ENCODE measurements at regions of chr9 and their contacts with region 1.

Region 1: DNA sequence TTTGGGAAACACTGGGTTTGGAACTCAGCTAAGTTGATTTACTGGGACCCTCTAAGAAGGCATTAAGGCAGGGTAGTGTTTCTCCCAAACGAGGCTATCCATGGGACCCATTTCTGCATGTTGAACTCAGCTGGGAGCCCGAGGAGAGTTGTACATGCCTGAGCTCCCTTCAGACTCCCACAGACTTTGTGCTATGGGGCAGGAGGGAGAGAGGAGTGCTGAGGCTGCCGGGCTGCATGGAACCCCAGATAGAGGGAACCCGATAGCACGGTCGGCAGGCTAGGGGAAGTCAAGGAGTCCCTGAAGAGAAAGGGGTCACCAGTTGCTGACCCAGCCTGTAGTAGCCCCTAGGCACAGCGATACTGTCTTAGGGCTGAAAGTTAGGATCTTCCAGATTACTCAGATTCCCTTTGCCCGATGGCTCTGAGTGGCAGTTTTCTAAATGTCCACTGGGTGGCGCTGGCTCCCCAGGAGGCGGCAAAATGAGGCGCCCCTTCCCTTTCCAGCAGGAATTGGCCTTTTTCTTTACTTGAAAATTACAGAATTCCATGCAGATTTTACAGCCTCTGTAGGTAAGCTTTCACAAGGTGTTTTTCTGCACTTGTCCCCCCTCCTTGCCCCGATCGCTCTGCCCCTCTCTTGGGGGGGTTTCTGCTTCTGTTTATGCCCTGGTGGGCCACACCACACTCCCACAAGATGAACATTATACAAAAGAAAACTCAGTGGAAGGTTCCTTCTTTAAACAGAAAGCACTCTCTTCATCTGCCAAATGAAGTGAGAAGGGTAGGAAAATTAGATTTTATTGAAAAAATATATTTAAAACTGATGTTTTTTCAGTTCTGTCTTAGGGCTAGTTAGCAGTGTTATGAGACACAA is 17.8 kb downstream of the NANS start:
- DNase-seq: peak; percentile 46 to 78 (median 63)
- ATAC-seq: peak; percentile 47
- H3K4me3 ChIP-seq: no peak overlapping the region
- H3K4me3 Mint-ChIP-seq: peak overlapping the region; percentile 26 to 79 (median 64)
- H3K27ac ChIP-seq: peak overlapping the region; percentile 81
- H3K27ac Mint-ChIP-seq: peak overlapping the region; percentile 83 to 98 (median 94)
- H3K4me1 ChIP-seq: peaks cover 27 to 28% of the 10 kb centered on the region in 2 donors
- H3K4me1 Mint-ChIP-seq: peaks cover 0 to 55% (median 46%) of the 10 kb centered on the region in 7 donors
- H3K27me3 ChIP-seq: no peaks in the 10 kb centered on the region
- H3K27me3 Mint-ChIP-seq: no peaks in the 10 kb centered on the region

Region 2: DNA sequence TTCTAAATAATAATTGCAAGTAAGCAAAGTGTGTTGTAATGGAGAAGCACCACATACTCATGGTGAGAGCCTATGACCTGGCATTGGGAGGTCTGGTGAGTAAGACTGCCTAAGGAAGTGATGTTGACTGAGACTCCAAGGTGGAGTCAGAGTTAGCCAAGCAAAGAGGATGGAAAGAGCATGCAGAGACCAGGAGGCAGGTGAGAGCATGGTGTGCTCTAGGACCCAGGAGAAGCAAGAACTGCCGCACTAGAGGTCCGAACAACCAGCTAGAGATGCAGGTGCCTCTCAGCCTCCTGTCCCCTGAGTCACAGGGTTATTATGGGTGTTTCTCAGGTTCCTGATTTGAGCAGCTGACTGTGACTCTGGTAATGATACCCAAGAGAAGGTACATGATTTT is 63.9 kb before region 1 on chr9:
- CTCF ChIA-PET with region 1: no interaction called
- POLR2A ChIA-PET with region 1: no interaction called
- intact Hi-C with region 1: no loop called
- DNase-seq: no peak
- ATAC-seq: peak; percentile 61
- H3K4me3 ChIP-seq: no peak overlapping the region
- H3K4me3 Mint-ChIP-seq: peak overlapping the region in 5 of 10 donors; percentile 6 to 65 (median 33)
- H3K27ac ChIP-seq: no peak overlapping the region
- H3K27ac Mint-ChIP-seq: peak overlapping the region in 5 of 9 donors; percentile 7 to 74 (median 60)
- H3K4me1 ChIP-seq: no peaks in the 10 kb centered on the region
- H3K4me1 Mint-ChIP-seq: peaks cover 1 to 38% (median 28%) of the 10 kb centered on the region in 7 donors
- H3K27me3 ChIP-seq: no peaks in the 10 kb centered on the region
- H3K27me3 Mint-ChIP-seq: no peaks in the 10 kb centered on the region

Region 3: DNA sequence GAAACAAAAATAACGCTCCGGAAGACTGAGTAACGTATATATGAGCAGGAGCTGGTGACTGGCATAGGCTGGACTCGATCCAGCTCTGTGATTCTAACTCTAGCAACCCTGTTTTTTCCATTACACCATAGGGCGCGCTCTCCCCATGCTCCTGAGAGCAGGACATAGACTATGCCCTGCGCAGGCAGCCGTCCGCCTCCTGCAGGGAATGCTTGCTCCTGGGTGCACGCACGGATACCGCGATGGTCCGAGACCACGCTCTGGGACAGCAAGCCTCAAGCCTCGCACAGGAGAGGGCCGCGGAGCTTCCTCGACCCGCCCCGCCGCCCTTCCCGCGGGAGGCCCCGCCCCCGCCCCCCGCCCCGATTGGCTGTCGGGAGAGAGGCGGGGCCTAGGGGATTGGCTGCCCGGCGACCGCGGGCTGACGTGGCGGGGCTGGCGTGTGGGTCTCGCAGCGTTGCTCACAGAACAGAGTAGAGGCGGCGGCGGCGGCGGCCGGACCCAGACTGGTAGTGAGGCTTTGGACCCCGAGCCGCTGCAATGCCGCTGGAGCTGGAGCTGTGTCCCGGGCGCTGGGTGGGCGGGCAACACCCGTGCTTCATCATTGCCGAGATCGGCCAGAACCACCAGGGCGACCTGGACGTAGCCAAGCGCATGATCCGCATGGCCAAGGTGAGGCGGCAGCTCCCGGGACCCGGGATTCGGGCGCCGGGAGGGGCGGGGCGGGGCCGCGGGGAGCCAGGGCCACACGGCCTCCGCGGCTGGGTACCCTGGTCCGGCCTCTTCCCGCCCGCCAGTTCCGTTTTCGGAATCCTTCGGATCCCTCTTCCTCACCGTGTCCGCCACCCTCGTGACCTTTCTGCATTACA is 17.9 kb before region 1 on chr9 and contains the start of gene NANS:
- CTCF ChIA-PET with region 1: no interaction called
- POLR2A ChIA-PET with region 1: interaction called, 3 read pairs
- intact Hi-C with region 1: loop called (anchors 1 kb)
- DNase-seq: peak; percentile 84 to 93 (median 91)
- ATAC-seq: peak; percentile 99
- H3K4me3 ChIP-seq: peak within 1 kb of the TSS; percentile 73
- H3K4me3 Mint-ChIP-seq: peak within 1 kb of the TSS; percentile 93 to 100 (median 95)
- H3K27ac ChIP-seq: peak within 1 kb of the TSS; percentile 93
- H3K27ac Mint-ChIP-seq: peak within 1 kb of the TSS; percentile 93 to 100 (median 97)
- H3K4me1 ChIP-seq: peaks cover 9 to 22% of the 10 kb centered on the region in 2 donors
- H3K4me1 Mint-ChIP-seq: peaks cover 6 to 40% (median 27%) of the 10 kb centered on the region in 7 donors
- H3K27me3 ChIP-seq: no peaks in the 10 kb centered on the region
- H3K27me3 Mint-ChIP-seq: no peaks in the 10 kb centered on the region
- total RNA-seq, gene NANS: 16.3 to 58.9 (median 51.8) TPM

Region 4: DNA sequence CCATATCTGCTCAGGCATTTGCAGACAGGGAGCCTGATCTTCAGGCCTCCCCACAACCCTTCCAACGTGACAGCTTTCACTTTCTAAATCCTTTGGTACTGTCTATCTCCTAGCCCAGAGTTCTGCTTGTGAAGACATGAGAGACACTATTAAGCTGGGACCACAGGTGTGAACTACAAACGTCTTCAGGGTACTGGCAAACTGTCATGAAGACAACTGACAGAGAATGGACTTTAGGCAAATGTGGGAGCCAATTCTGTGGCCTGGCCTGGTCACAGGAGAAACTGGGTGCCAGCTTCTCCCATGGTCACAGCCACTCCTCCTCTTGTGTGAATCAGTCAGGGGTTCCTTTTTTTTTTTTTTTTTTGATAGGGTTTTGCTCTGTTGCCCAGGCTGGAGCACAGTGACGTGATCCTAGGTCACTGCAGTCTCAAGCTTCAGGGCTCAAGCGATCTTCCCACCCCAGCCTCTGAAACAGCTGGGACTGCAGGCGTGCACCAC is 34.2 kb after region 1 on chr9:
- CTCF ChIA-PET with region 1: interaction called, 5 read pairs
- POLR2A ChIA-PET with region 1: interaction called, 10 read pairs
- intact Hi-C with region 1: no loop called
- DNase-seq: peak in 8 of 9 donors; percentile 37 to 76 (median 66)
- ATAC-seq: peak; percentile 93
- H3K4me3 ChIP-seq: peak overlapping the region; percentile 10
- H3K4me3 Mint-ChIP-seq: peak overlapping the region; percentile 52 to 83 (median 73)
- H3K27ac ChIP-seq: peak overlapping the region; percentile 77
- H3K27ac Mint-ChIP-seq: peak overlapping the region; percentile 81 to 99 (median 97)
- H3K4me1 ChIP-seq: peaks cover 69 to 70% of the 10 kb centered on the region in 2 donors
- H3K4me1 Mint-ChIP-seq: peaks cover 50 to 91% (median 83%) of the 10 kb centered on the region in 7 donors
- H3K27me3 ChIP-seq: no peaks in the 10 kb centered on the region
- H3K27me3 Mint-ChIP-seq: no peaks in the 10 kb centered on the region

Region 5: GRCh38 chr9:98192503-98193335 is 118.4 kb after region 1 on chr9 and contains the start of gene CORO2A:
- CTCF ChIA-PET with region 1: interaction called, 6 read pairs
- POLR2A ChIA-PET with region 1: no interaction called
- intact Hi-C with region 1: loop called (anchors 1 to 5 kb)
- DNase-seq: peak; percentile 37 to 85 (median 47)
- ATAC-seq: peak; percentile 86
- H3K4me3 ChIP-seq: peak within 1 kb of the TSS; percentile 81
- H3K4me3 Mint-ChIP-seq: peak within 1 kb of the TSS; percentile 76 to 92 (median 86)
- H3K27ac ChIP-seq: peak within 1 kb of the TSS; percentile 53
- H3K27ac Mint-ChIP-seq: peak within 1 kb of the TSS; percentile 19 to 90 (median 83)
- H3K4me1 ChIP-seq: peaks cover 17 to 22% of the 10 kb centered on the region in 2 donors
- H3K4me1 Mint-ChIP-seq: peaks cover 12 to 46% (median 41%) of the 10 kb centered on the region in 7 donors
- H3K27me3 ChIP-seq: no peaks in the 10 kb centered on the region
- H3K27me3 Mint-ChIP-seq: peaks cover 0 to 17% (median 0%) of the 10 kb centered on the region in 5 donors
- total RNA-seq, gene CORO2A: 3.0 to 9.7 (median 7.7) TPM

Region 6: GRCh38 chr9:98215821-98216220 is 141.5 kb after region 1 on chr9:
- CTCF ChIA-PET with region 1: interaction called, 3 read pairs
- POLR2A ChIA-PET with region 1: no interaction called
- intact Hi-C with region 1: loop called in 1 of 2 experiments (anchors 1 kb)
- DNase-seq: peak in 3 of 9 donors; percentile 11 to 18 (median 12)
- ATAC-seq: no peak
- H3K4me3 ChIP-seq: no peak overlapping the region
- H3K4me3 Mint-ChIP-seq: no peak overlapping the region
- H3K27ac ChIP-seq: no peak overlapping the region
- H3K27ac Mint-ChIP-seq: no peak overlapping the region
- H3K4me1 ChIP-seq: no peaks in the 10 kb centered on the region
- H3K4me1 Mint-ChIP-seq: peaks cover 0 to 6% (median 0%) of the 10 kb centered on the region in 7 donors
- H3K27me3 ChIP-seq: no peaks in the 10 kb centered on the region
- H3K27me3 Mint-ChIP-seq: no peaks in the 10 kb centered on the region

Region 7: GRCh38 chr9:98263482-98264357 is 189.4 kb after region 1 on chr9:
- CTCF ChIA-PET with region 1: interaction called, 4 read pairs
- POLR2A ChIA-PET with region 1: no interaction called
- intact Hi-C with region 1: loop called (anchors 1 kb)
- DNase-seq: peak; percentile 54 to 82 (median 77)
- ATAC-seq: peak; percentile 100
- H3K4me3 ChIP-seq: no peak overlapping the region
- H3K4me3 Mint-ChIP-seq: no peak overlapping the region
- H3K27ac ChIP-seq: no peak overlapping the region
- H3K27ac Mint-ChIP-seq: peak overlapping the region in 1 of 9 donors; percentile 59
- H3K4me1 ChIP-seq: no peaks in the 10 kb centered on the region
- H3K4me1 Mint-ChIP-seq: peaks cover 0 to 3% (median 0%) of the 10 kb centered on the region in 7 donors
- H3K27me3 ChIP-seq: no peaks in the 10 kb centered on the region
- H3K27me3 Mint-ChIP-seq: peaks cover 0 to 23% (median 0%) of the 10 kb centered on the region in 5 donors

Measured in naive thymus-derived CD4-positive, alpha-beta T cell (primary cell).